Activated CD8-positive, alpha-beta T cell treated with anti-CD3 and anti-CD28 coated beads for 36 hours (primary cell): ENCODE measurements at regions of chr3 and their contacts with region 1.

Region 1: GRCh38 chr3:150787741-150788370 is 24.9 kb upstream of the SIAH2 start:
- DNase-seq: peak; percentile 93
- ATAC-seq: peak; percentile 72
- H3K4me3 Mint-ChIP-seq: no peak overlapping the region
- H3K27ac Mint-ChIP-seq: no peak overlapping the region
- H3K4me1 Mint-ChIP-seq: peaks cover 41% of the 10 kb centered on the region
- H3K27me3 Mint-ChIP-seq: peaks cover 6% of the 10 kb centered on the region
- CTCF ChIP-seq: peak; percentile 95

Region 2: GRCh38 chr3:150721285-150722130 is 66.3 kb before region 1 on chr3:
- CTCF ChIA-PET with region 1: interaction called, 48 read pairs
- POLR2A ChIA-PET with region 1: interaction called, 3 read pairs
- intact Hi-C with region 1: loop called (anchors 5 kb)
- DNase-seq: no peak
- ATAC-seq: peak; percentile 85
- H3K4me3 Mint-ChIP-seq: no peak overlapping the region
- H3K27ac Mint-ChIP-seq: no peak overlapping the region
- H3K4me1 Mint-ChIP-seq: peaks cover 19% of the 10 kb centered on the region
- H3K27me3 Mint-ChIP-seq: no peaks in the 10 kb centered on the region
- CTCF ChIP-seq: peak; percentile 77

Region 3: DNA sequence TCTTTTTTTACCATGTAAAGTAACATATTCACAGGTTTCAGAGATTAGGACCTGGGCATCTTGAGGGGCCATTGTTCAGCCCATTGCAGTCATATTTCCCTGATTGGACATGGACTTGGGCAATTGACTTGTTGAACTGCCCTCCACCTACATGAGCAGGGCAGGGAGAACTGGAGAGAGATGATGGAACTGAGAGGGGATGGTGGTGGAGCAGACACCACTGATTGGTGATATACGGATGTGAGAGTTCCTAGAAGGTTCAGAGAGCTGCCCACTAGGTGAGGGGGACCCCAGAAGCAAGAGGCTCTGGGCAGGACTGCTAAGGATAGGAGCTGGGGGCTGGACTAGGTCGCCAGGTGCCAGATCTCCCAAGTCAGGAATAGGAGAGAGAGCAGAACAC is 12.9 kb after region 1 on chr3:
- CTCF ChIA-PET with region 1: interaction called, 29 read pairs
- POLR2A ChIA-PET with region 1: no interaction called
- intact Hi-C with region 1: no loop called
- DNase-seq: no peak
- ATAC-seq: no peak
- H3K4me3 Mint-ChIP-seq: no peak overlapping the region
- H3K27ac Mint-ChIP-seq: no peak overlapping the region
- H3K4me1 Mint-ChIP-seq: peaks cover 10% of the 10 kb centered on the region
- H3K27me3 Mint-ChIP-seq: peaks cover 16% of the 10 kb centered on the region
- CTCF ChIP-seq: no peak

Region 4: GRCh38 chr3:150830094-150830681 is 42.3 kb after region 1 on chr3:
- CTCF ChIA-PET with region 1: interaction called, 17 read pairs
- POLR2A ChIA-PET with region 1: no interaction called
- intact Hi-C with region 1: no loop called
- DNase-seq: peak; percentile 28
- ATAC-seq: peak; percentile 66
- H3K4me3 Mint-ChIP-seq: no peak overlapping the region
- H3K27ac Mint-ChIP-seq: no peak overlapping the region
- H3K4me1 Mint-ChIP-seq: no peaks in the 10 kb centered on the region
- H3K27me3 Mint-ChIP-seq: no peaks in the 10 kb centered on the region
- CTCF ChIP-seq: peak; percentile 46

Region 5: DNA sequence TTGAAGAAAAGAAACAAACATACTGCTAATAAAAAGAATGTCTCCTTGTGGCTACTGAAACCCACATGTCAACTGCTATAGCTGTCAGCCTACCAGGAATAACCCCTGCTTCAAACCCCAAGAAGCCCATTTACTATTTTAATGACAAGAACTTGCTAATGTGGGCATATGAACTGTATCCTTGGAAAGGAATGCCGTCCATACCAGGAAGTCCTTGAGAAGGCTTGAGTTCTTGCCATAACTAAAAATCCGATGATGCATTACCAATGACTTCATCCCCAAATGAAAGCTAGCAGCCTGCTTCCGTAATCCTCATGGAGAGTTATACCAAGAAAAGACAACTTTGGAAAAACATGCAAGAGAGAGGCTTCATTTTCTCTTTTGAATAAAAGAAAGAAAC is 82.5 kb after region 1 on chr3:
- CTCF ChIA-PET with region 1: interaction called, 24 read pairs
- POLR2A ChIA-PET with region 1: no interaction called
- intact Hi-C with region 1: loop called (anchors 1 kb)
- DNase-seq: no peak
- ATAC-seq: no peak
- H3K4me3 Mint-ChIP-seq: no peak overlapping the region
- H3K27ac Mint-ChIP-seq: no peak overlapping the region
- H3K4me1 Mint-ChIP-seq: peaks cover under 1% of the 10 kb centered on the region
- H3K27me3 Mint-ChIP-seq: peaks cover 7% of the 10 kb centered on the region
- CTCF ChIP-seq: no peak

Region 6: DNA sequence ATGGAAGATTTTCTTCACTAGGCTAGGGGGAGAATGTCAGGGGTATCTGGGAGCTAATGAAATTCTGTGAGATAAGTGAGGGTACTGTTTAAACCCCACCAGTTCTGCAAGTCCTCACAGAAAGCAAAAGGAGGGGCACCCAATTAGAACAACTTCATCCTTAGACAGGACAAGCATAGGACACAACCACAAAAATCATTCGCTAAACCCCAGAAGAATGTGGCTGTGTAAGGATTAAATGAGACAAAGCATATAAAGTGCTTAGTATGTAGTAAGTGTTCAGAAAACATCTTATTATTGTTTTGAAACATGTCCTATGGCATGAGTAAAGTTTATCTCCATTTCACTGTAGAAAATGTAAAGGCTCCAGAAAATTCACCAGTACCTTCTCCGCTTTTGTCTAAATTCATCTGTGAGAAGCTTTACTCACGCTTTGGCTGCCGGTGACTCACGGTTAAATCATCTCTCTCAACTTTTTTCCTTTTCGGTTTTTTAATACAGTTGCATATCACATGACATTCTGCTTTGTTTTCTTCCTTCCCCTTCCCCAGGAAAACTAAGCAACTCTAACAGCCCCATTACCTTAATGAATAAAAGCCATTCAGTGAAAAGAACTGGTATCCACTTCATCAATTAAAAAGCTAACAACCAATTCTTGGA is 182.9 kb after region 1 on chr3:
- CTCF ChIA-PET with region 1: no interaction called
- POLR2A ChIA-PET with region 1: no interaction called
- intact Hi-C with region 1: no loop called
- DNase-seq: no peak
- ATAC-seq: no peak
- H3K4me3 Mint-ChIP-seq: no peak overlapping the region
- H3K27ac Mint-ChIP-seq: no peak overlapping the region
- H3K4me1 Mint-ChIP-seq: peaks cover 5% of the 10 kb centered on the region
- H3K27me3 Mint-ChIP-seq: peaks cover 3% of the 10 kb centered on the region
- CTCF ChIP-seq: no peak

Region 7: GRCh38 chr3:151171145-151171757 is 383.4 kb after region 1 on chr3:
- CTCF ChIA-PET with region 1: no interaction called
- POLR2A ChIA-PET with region 1: no interaction called
- intact Hi-C with region 1: no loop called
- DNase-seq: peak; percentile 73
- ATAC-seq: peak; percentile 81
- H3K4me3 Mint-ChIP-seq: peak overlapping the region; percentile 31
- H3K27ac Mint-ChIP-seq: peak overlapping the region; percentile 86
- H3K4me1 Mint-ChIP-seq: peaks cover 46% of the 10 kb centered on the region
- H3K27me3 Mint-ChIP-seq: no peaks in the 10 kb centered on the region
- CTCF ChIP-seq: no peak